ENCODE measurements at regions of chr4 and their contacts with region 1.

Region 1: DNA sequence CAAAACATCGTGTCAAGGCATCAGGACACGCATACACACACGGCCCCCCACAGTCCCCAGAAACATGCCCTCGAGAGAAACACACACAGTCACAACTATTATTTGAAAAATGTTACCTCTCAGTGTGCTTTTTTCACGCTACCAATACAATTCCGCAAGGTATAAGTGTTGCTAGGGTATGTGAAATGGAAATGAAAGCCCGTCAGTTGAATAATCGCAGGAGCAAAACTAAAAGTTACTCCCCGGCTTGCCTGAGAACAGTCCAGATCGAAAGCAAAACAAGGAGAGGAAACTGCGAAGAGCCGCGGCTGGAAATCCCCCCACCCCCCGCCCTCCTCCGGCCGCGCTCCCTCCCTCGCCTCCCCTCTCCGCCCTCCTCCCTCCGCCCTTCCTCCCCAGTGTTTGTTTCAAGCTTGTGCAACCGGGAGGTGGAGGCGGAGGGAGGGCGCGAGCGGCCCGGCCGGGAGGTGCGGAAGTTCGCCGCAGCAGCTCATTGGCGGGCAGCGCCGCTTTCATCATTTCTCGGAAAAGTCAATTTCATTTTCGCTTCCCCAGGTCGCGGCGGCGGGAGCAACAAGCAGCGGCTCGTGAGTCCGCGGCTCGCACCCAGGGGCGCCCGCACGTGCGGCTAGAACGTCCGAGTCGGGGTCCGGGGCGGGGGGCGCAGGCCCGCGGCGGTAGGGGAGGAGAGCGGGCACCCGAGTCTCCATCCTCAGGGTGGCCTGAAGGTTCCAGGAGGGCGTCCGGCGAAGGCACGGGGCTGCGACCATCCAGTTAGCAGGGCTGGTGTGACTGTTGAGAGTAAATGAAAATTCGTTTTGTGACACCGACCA is at the start of gene IRF2:
- DNase-seq: peak; percentile 97 to 98
- ATAC-seq: peak; percentile 91 to 95 (median 92)
- H3K4me3 ChIP-seq: peak within 1 kb of the TSS; percentile 65 to 98 (median 87)
- H3K27ac ChIP-seq: peak within 1 kb of the TSS; percentile 94 to 99 (median 98)
- H3K4me1 ChIP-seq: peaks cover 0 to 70% (median 57%) of the 10 kb centered on the region in 9 donors
- H3K27me3 ChIP-seq: no peaks in the 10 kb centered on the region
- CTCF ChIP-seq: peak in 2 of 9 donors; percentile 19 to 23
- total RNA-seq, gene IRF2: 18.3 to 41.4 (median 29.0) TPM

Region 2: DNA sequence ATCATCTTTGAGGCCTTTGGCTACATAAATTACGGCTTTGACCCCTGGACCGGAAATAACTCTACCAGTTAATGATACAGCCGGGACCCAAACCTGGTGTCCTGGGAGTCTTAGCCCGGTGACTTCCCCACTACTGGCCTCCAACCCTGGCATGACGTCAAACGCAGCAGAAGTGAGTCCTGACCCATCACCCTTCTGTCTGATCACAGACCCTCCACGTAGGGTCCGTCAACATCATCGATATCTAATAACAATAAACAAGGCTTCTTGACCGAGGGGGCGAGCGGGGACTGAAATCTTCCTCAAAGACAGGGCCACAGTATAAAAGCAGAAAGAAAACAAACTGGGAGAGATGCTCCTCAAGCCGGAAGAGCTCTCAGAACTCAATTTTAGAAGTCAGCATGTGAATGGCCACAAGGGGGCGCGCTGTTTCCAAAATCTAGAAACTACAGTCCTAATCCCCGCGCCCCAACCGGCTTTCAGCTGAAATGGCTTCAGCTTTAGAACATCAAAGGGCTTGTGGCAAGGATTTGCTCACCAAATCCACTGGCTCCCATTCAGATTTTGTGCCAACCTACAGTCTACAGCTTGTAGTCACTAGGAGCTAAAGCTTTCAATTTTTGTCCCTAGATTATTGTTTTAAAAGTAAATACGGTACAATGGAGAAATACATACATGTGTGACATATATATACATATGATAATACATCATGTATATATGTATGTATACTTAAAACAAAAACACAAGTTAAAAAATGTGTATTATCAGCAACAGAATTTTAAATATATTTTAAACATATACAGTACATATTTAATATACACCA is 210.4 kb before region 1 on chr4:
- intact Hi-C with region 1: loop called in 5 of 10 experiments (anchors 2 to 10 kb)
- DNase-seq: peak; percentile 90 to 94
- ATAC-seq: peak; percentile 74 to 89 (median 86)
- H3K4me3 ChIP-seq: peak overlapping the region in 2 of 10 donors; percentile 20 to 27
- H3K27ac ChIP-seq: no peak overlapping the region
- H3K4me1 ChIP-seq: peaks cover 0 to 46% (median 7%) of the 10 kb centered on the region in 9 donors
- H3K27me3 ChIP-seq: no peaks in the 10 kb centered on the region
- CTCF ChIP-seq: peak; percentile 88 to 93 (median 91)

Region 3: GRCh38 chr4:184287697-184288255 is 186.7 kb before region 1 on chr4:
- intact Hi-C with region 1: loop called in 4 of 10 experiments (anchors 5 to 10 kb)
- DNase-seq: no peak
- ATAC-seq: peak; percentile 53 to 82 (median 76)
- H3K4me3 ChIP-seq: no peak overlapping the region
- H3K27ac ChIP-seq: peak overlapping the region in 3 of 10 donors; percentile 0 to 34 (median 5)
- H3K4me1 ChIP-seq: peaks cover 0 to 20% (median 9%) of the 10 kb centered on the region in 9 donors
- H3K27me3 ChIP-seq: no peaks in the 10 kb centered on the region
- CTCF ChIP-seq: peak in 8 of 9 donors; percentile 14 to 66 (median 48)

Region 4: DNA sequence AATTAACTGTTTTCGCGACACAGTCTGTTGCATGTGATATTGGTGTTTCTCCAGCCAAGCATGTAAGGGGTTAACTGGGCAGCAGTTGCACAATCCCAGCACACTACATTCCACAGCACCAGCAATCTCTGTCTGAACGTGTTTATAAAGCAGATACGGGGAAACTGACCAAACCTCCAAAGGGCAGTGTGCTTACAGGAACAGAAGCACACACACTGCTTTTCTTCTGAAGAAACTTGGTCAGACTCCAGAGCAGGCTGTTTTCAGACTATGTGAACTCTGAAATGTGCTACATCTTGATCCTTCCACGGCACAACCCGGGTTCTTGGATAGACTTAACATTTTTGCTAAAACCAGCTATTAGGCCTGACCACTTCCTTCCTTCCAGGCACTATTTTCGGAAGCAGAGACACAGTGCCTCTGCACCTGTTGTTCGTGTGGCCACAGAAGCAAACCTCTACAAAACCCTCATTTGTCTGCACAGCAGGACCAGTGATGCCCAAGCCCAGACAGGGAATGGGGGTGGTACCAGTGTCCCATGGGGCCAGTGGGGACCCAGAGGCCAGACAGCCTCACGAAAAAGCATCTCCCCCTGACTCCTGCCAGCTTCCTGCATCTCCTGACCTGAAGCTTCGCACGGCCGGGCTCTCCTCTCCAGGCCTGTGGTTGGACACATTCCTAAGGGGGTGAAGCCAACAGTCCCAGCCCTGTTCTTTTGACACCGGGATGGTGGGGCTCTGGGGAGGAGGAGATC is 90.2 kb before region 1 on chr4:
- intact Hi-C with region 1: loop called in 5 of 10 experiments (anchors 2 to 5 kb)
- DNase-seq: no peak
- ATAC-seq: peak in 7 of 8 donors; percentile 22 to 48 (median 39)
- H3K4me3 ChIP-seq: peak overlapping the region in 8 of 10 donors; percentile 8 to 41 (median 28)
- H3K27ac ChIP-seq: peak overlapping the region; percentile 85 to 95 (median 89)
- H3K4me1 ChIP-seq: peaks cover 32 to 78% (median 67%) of the 10 kb centered on the region in 9 donors
- H3K27me3 ChIP-seq: no peaks in the 10 kb centered on the region
- CTCF ChIP-seq: no peak

Region 5: DNA sequence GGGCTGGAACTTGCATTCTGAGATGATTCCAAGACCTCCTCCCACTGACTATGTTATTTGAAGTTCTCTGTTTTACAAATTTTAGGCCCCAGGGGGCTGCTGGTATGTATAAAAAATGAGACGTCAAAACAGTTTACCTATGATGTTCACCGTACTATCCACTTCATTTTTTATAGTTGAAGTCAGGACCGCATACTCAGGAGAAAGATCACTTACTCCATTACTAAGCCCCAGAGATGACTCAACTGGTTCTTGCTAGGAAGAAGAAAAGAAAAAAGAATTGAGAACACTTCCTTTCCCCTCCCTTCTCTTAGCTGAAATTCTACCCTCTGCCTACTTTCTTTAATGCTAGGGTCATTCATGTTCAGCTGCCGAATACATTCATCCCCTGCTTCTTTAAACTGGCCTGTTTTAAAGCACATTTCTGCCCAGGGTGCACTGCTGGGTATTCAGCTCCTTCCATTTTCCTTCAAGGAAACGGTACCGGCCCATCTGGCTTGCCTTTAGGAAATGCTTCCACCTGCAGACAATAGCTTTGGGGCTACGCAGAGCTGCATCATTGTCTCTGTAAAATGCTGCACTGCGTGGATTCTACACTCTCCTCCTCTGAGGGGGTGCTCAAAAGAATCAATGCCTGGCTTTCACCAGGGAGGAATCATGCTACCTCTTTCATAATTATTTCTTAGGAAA is 66.3 kb before region 1 on chr4:
- intact Hi-C with region 1: loop called in 5 of 10 experiments (anchors 5 to 10 kb)
- DNase-seq: no peak
- ATAC-seq: no peak
- H3K4me3 ChIP-seq: no peak overlapping the region
- H3K27ac ChIP-seq: peak overlapping the region in 9 of 10 donors; percentile 47 to 83 (median 73)
- H3K4me1 ChIP-seq: peaks cover 16 to 81% (median 61%) of the 10 kb centered on the region in 9 donors
- H3K27me3 ChIP-seq: no peaks in the 10 kb centered on the region
- CTCF ChIP-seq: no peak

Region 6: DNA sequence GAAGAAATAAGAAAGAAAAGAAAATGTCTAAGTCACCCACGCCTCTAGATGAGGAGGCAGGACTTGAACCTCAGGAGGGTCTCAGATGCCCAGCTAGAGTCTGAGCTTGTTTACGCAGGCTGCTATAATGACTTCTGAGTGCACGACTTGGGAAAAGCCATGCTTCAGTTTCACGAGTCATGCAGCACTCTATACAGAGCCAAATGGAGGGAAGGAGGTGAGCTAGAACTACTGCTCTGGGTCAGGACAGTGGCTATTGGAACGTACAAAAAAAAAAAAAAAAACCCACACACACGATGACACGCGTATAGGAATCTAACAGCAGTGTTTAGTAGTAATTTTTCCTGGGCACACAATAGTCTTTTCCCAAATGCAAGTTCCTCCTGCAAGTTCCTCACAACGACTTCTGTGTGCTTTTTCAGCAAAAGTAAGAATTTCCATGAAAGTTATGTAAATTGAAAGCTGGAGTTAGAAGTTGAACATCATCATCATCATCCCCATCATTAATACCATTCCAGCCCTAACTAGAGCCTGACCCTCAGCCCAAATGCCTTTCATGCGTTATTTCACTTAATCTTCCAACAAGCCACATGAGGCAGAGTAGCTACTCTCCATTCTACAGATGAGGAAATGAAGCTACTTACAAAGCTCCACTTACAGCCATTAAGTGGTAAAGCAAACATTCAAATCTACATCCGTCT is 36.8 kb before region 1 on chr4:
- intact Hi-C with region 1: no loop called
- DNase-seq: no peak
- ATAC-seq: peak in 1 of 8 donors; percentile 23
- H3K4me3 ChIP-seq: no peak overlapping the region
- H3K27ac ChIP-seq: peak overlapping the region in 3 of 10 donors; percentile 0 to 32 (median 10)
- H3K4me1 ChIP-seq: peaks cover 18 to 87% (median 77%) of the 10 kb centered on the region in 9 donors
- H3K27me3 ChIP-seq: no peaks in the 10 kb centered on the region
- CTCF ChIP-seq: no peak

Region 7: DNA sequence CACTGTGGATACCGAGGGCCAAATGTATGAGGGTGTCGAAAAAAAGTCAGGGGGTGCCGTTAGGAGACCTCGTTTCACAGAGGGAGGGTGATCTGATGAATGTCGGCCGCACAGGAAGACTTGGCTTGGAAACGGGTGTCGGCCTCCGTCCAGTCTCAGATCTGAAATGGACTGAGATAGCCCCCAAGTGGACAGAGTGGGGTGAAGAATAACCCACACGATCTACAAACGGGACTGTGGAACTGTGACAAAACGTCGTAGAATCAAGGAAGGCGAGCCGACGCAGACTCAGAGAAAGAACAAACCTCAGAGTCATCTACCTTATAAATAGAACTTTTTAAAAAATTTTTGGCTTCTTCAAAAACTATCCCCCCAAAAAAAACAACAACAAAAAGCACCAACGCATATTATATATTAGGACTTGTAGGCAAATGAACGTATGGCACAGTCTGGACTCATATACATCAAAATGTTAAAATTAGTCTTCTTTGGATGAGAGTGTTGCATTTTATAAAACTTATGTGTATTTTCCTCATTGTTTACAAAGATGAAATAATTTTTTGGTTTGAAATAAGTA is 63.6 kb after region 1 on chr4:
- intact Hi-C with region 1: loop called in 9 of 10 experiments (anchors 1 to 10 kb)
- DNase-seq: peak; percentile 85 to 93
- ATAC-seq: peak; percentile 90 to 97 (median 94)
- H3K4me3 ChIP-seq: peak overlapping the region in 9 of 10 donors; percentile 60 to 72 (median 71)
- H3K27ac ChIP-seq: peak overlapping the region; percentile 87 to 99 (median 96)
- H3K4me1 ChIP-seq: peaks cover 2 to 43% (median 31%) of the 10 kb centered on the region in 9 donors
- H3K27me3 ChIP-seq: no peaks in the 10 kb centered on the region
- CTCF ChIP-seq: peak; percentile 42 to 84 (median 75)

Measured in heart right ventricle (tissue), 16 donors.